Prostate gland (tissue), 2 donors: ENCODE measurements at regions of chr1 and their contacts with region 1.

Region 1: DNA sequence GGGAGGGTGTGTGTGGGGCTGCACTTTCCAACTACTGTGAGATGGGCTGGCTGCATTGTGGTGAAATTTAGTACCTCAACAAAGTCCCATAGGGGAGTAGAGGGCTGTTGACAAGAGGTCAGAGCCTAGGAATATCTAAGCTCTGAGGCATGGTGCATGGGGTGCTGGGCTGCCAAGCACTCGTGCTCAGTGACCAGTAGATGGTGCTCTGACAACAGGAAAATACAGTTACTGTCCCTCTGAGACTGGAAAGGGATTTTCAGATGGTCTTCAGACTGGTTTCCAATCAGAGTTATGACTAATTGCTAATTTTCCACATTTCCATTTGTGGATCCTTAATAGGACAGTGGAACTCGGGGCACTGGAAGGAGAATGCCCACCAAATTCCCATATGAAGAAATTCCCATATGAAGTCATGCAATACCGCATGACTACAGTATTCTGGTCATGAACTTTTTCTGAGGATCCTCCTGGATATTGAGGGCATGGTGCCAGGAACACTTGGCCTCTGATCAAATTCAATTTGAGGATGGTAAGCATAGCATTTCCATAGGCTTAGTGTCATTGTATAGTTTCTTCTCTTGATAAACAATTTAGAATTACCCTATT is 4.1 kb upstream of the CACNA1E start:
- DNase-seq: peak; percentile 31
- H3K4me3 ChIP-seq: no peak overlapping the region
- H3K27ac ChIP-seq: no peak overlapping the region
- H3K4me1 ChIP-seq: no peaks in the 10 kb centered on the region
- H3K27me3 ChIP-seq: peaks cover 12% of the 10 kb centered on the region
- CTCF ChIP-seq: peak in 3 of 4 experiments; percentile 63 to 69 (median 68)
- POLR2A ChIP-seq: no peak

Region 2: GRCh38 chr1:181383702-181384101 is 95.5 kb before region 1 on chr1:
- intact Hi-C with region 1: no loop called
- DNase-seq: no peak
- H3K4me3 ChIP-seq: no peak overlapping the region
- H3K27ac ChIP-seq: no peak overlapping the region
- H3K4me1 ChIP-seq: no peaks in the 10 kb centered on the region
- H3K27me3 ChIP-seq: no peaks in the 10 kb centered on the region
- CTCF ChIP-seq: no peak
- POLR2A ChIP-seq: no peak

Region 3: DNA sequence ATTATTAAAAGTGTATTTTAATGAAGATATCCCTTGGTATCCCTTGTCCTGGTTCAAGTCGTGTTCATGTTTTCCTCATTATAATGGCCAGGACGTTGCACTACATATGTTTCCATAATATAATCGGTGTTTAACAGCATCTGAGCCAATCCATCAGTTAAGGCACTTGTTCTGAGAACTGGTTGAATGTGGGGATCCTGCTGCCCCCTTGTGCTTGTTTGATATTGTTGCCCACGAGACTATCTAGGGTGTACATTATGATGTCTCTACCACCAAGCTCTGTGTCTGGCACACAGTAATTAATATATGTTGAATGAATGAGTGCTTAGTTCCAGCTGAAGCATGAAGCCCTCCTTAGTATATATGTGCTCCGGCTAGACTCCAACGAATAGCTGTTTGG is 197.0 kb after region 1 on chr1:
- intact Hi-C with region 1: loop called (anchors 2 kb)
- DNase-seq: no peak
- H3K4me3 ChIP-seq: no peak overlapping the region
- H3K27ac ChIP-seq: no peak overlapping the region
- H3K4me1 ChIP-seq: no peaks in the 10 kb centered on the region
- H3K27me3 ChIP-seq: no peaks in the 10 kb centered on the region
- CTCF ChIP-seq: no peak
- POLR2A ChIP-seq: no peak